ENCODE measurements at regions of chr17 and their contacts with region 1.

Region 1: DNA sequence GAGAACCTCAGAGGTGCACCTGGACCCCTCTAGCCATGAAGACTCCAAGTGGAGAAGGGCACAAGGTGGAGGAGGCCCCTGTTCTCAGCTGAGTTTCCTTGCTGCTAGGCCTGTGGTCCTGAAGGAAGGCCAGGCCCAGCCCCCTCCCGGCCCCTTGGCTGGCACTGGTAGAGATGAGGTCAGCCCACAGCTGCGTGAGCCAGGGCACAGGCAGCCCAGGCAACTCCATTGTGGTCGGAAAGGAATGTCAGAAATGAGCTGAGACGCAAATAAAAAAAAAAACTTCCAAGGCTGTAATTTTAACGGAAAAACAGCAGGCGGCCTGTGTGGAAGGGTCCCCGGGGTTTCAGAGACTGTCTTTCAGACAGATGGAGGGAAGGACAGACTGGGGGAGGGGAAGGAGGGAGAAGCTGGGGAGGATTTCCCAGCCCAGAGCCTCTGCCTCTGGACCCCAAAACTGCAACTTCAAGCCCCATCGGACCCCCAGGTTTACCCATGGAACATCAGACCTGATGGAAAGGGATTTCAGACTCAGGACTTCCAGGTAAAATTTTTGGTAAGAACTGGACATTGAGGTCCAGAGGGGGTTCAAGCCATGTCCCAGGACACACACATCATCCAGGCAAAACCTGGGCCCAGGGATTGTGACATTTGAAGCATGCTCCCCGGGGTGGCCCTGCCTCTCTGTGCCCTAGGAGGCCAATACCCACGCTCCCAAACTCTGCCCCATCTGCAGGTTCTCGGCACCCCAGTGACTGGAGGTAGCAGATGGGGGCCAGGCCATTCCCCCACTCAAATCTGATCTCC is 25.7 kb upstream of the MRPS23 start:
- DNase-seq: peak; percentile 99
- ATAC-seq: peak; percentile 80
- H3K4me3 ChIP-seq: peak overlapping the region; percentile 16; the same call in 1 of the 2 replicates
- H3K27ac ChIP-seq: peak overlapping the region; percentile 65
- H3K4me1 ChIP-seq: peaks cover 70% of the 10 kb centered on the region
- H3K27me3 ChIP-seq: no peaks in the 10 kb centered on the region
- CTCF ChIP-seq: peak; percentile 80

Region 2: GRCh38 chr17:56833809-56834379 is 1041.6 kb before region 1 on chr17 and contains the starts of genes C17orf67 and DGKE:
- CTCF ChIA-PET with region 1: interaction called, 18 read pairs
- POLR2A ChIA-PET with region 1: no interaction called
- intact Hi-C with region 1: no loop called
- DNase-seq: peak; percentile 98
- ATAC-seq: peak; percentile 79
- H3K4me3 ChIP-seq: peak within 1 kb of the TSS; percentile 74
- H3K27ac ChIP-seq: peak within 1 kb of the TSS; percentile 16
- H3K4me1 ChIP-seq: peaks cover 43% of the 10 kb centered on the region
- H3K27me3 ChIP-seq: no peaks in the 10 kb centered on the region
- CTCF ChIP-seq: no peak
- total RNA-seq, gene C17orf67: 2.3 and 4.4 TPM in 2 replicates
- total RNA-seq, gene DGKE: 8.4 and 12.4 TPM in 2 replicates

Region 3: GRCh38 chr17:57747221-57748017 is 128.1 kb before region 1 on chr17:
- CTCF ChIA-PET with region 1: no interaction called
- POLR2A ChIA-PET with region 1: no interaction called
- intact Hi-C with region 1: no loop called
- DNase-seq: peak; percentile 83
- ATAC-seq: peak; percentile 95
- H3K4me3 ChIP-seq: no peak overlapping the region
- H3K27ac ChIP-seq: no peak overlapping the region
- H3K4me1 ChIP-seq: no peaks in the 10 kb centered on the region
- H3K27me3 ChIP-seq: peaks cover 40% of the 10 kb centered on the region
- CTCF ChIP-seq: peak; percentile 96

Region 4: GRCh38 chr17:57861000-57861789 is 14.3 kb before region 1 on chr17:
- CTCF ChIA-PET with region 1: interaction called, 13 read pairs
- POLR2A ChIA-PET with region 1: interaction called, 3 read pairs
- intact Hi-C with region 1: no loop called
- DNase-seq: peak; percentile 50
- ATAC-seq: peak; percentile 30
- H3K4me3 ChIP-seq: peak overlapping the region; percentile 63
- H3K27ac ChIP-seq: peak overlapping the region; percentile 8
- H3K4me1 ChIP-seq: peaks cover 27% of the 10 kb centered on the region
- H3K27me3 ChIP-seq: no peaks in the 10 kb centered on the region
- CTCF ChIP-seq: no peak

Region 5: GRCh38 chr17:57946798-57947358 is 71.4 kb after region 1 on chr17:
- CTCF ChIA-PET with region 1: interaction called, 10 read pairs
- POLR2A ChIA-PET with region 1: interaction called, 4 read pairs
- intact Hi-C with region 1: loop called (anchors 1 kb)
- DNase-seq: peak; percentile 75
- ATAC-seq: peak; percentile 18
- H3K4me3 ChIP-seq: peak overlapping the region; percentile 55
- H3K27ac ChIP-seq: peak overlapping the region; percentile 98
- H3K4me1 ChIP-seq: peaks cover 74% of the 10 kb centered on the region
- H3K27me3 ChIP-seq: no peaks in the 10 kb centered on the region
- CTCF ChIP-seq: no peak

Region 6: GRCh38 chr17:57987580-57988421 is 112.3 kb after region 1 on chr17 and contains the start of gene VEZF1:
- CTCF ChIA-PET with region 1: interaction called, 8 read pairs
- POLR2A ChIA-PET with region 1: interaction called, 4 read pairs
- intact Hi-C with region 1: loop called (anchors 1 kb)
- DNase-seq: peak; percentile 79
- ATAC-seq: peak; percentile 42
- H3K4me3 ChIP-seq: peak within 1 kb of the TSS; percentile 80
- H3K27ac ChIP-seq: peak within 1 kb of the TSS; percentile 87
- H3K4me1 ChIP-seq: peaks cover 39% of the 10 kb centered on the region
- H3K27me3 ChIP-seq: no peaks in the 10 kb centered on the region
- CTCF ChIP-seq: no peak
- total RNA-seq, gene VEZF1: 70.1 and 78.1 TPM in 2 replicates

Measured in PC-3 (cell line).